ENCODE measurements at regions of chr10 and their contacts with region 1.

Region 1: GRCh38 chr10:86693721-86694369 is 25.5 kb downstream of the LDB3 start:
- DNase-seq: peak; percentile 37 to 59 (median 48)
- ATAC-seq: peak; percentile 45
- H3K4me3 ChIP-seq: no peak overlapping the region
- H3K27ac ChIP-seq: no peak overlapping the region
- H3K4me1 ChIP-seq: peaks cover 6% of the 10 kb centered on the region
- H3K27me3 ChIP-seq: no peaks in the 10 kb centered on the region
- CTCF ChIP-seq: peak; percentile 23 to 58 (median 50)
- POLR2A ChIP-seq: no peak

Region 2: GRCh38 chr10:86755740-86756510 is 62.1 kb after region 1 on chr10:
- intact Hi-C with region 1: no loop called
- DNase-seq: peak; percentile 91 to 94 (median 94)
- ATAC-seq: peak; percentile 90
- H3K4me3 ChIP-seq: peak overlapping the region; percentile 55 to 64
- H3K27ac ChIP-seq: peak overlapping the region; percentile 91 to 100 (median 98)
- H3K4me1 ChIP-seq: peaks cover 27% of the 10 kb centered on the region
- H3K27me3 ChIP-seq: no peaks in the 10 kb centered on the region
- CTCF ChIP-seq: no peak
- POLR2A ChIP-seq: peak; percentile 93 to 97 (median 95)

Region 3: GRCh38 chr10:86803156-86803555 is 109.3 kb after region 1 on chr10:
- intact Hi-C with region 1: no loop called
- DNase-seq: no peak
- ATAC-seq: no peak
- H3K4me3 ChIP-seq: no peak overlapping the region
- H3K27ac ChIP-seq: no peak overlapping the region
- H3K4me1 ChIP-seq: no peaks in the 10 kb centered on the region
- H3K27me3 ChIP-seq: no peaks in the 10 kb centered on the region
- CTCF ChIP-seq: no peak
- POLR2A ChIP-seq: no peak

Region 4: DNA sequence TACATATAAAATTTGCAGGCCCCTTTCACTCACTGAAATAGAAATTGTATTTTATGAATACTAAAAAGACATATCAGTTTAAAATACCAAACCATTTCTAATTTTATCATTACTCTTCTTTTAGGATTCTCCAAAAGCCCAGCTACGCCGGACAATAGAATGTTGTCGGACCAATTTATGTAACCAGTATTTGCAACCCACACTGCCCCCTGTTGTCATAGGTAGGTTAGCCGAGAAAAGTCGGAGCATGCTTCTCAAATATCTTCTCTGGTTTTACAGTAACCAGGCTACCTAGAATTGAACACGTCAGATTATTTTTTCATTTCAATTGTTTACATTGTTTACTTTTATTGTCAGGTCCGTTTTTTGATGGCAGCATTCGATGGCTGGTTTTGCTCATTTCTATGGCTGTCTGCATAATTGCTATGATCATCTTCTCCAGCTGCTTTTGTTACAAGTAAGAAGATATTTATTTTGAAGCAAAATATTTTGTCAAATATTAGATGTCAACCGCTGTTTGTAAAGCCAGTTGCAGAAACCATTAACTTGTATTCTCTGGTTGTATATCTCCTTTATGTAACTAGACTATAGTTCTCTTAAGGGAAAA is 205.9 kb after region 1 on chr10:
- intact Hi-C with region 1: loop called (anchors 5 kb)
- DNase-seq: peak; percentile 65 to 80 (median 76)
- ATAC-seq: peak; percentile 64
- H3K4me3 ChIP-seq: no peak overlapping the region
- H3K27ac ChIP-seq: no peak overlapping the region
- H3K4me1 ChIP-seq: peaks cover 11% of the 10 kb centered on the region
- H3K27me3 ChIP-seq: no peaks in the 10 kb centered on the region
- CTCF ChIP-seq: peak; percentile 27 to 87 (median 71)
- POLR2A ChIP-seq: no peak